GM10248 (cell line): ENCODE measurements at regions of chr1 and their contacts with region 1.

Region 1: GRCh38 chr1:160675641-160676410 is 29.0 kb upstream of the SLAMF1 start:
- DNase-seq: peak; percentile 67
- CTCF ChIP-seq: peak; percentile 90

Region 2: GRCh38 chr1:160646711-160647328 is 29.0 kb before region 1 on chr1 and contains the start of gene SLAMF1:
- CTCF ChIA-PET with region 1: interaction called, 16 read pairs
- POLR2A ChIA-PET with region 1: interaction called, 3 read pairs
- DNase-seq: no peak
- CTCF ChIP-seq: no peak

Region 3: DNA sequence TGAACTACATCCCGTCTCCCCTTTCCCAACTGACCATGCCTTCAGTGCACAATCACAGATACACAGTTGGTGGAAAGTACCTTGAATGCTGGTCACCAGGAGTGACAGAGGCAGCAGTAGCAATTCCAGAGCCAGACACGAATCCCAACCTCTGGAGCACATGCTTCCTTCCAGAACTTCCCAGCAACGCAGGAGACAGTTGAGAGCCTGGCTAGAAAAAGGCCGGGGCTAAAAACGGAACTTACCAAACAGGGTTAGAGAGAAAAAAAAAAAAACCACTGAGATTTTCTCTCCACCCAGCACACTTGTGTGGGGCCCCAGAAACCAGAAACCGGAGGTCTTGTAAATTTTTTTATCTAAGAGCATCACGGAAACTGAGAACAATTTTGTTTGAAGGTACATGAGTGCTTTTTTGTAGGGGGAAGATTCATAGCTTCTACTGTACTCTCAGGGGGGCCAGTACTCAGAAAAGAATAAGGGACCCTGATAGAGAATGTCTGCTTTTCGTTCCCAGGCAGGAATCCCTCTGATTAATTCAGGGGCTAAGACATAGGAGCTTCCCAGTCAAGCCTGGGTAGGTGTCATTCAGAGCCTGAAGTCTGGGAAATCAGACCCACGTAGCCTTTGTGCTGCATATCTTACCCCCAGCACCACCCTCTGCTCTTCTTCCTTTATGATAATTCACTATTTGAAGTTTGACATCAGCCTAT is 35.9 kb after region 1 on chr1 and contains the start of gene CD48:
- CTCF ChIA-PET with region 1: interaction called, 30 read pairs
- POLR2A ChIA-PET with region 1: no interaction called
- DNase-seq: peak; percentile 54
- CTCF ChIP-seq: no peak

Region 4: DNA sequence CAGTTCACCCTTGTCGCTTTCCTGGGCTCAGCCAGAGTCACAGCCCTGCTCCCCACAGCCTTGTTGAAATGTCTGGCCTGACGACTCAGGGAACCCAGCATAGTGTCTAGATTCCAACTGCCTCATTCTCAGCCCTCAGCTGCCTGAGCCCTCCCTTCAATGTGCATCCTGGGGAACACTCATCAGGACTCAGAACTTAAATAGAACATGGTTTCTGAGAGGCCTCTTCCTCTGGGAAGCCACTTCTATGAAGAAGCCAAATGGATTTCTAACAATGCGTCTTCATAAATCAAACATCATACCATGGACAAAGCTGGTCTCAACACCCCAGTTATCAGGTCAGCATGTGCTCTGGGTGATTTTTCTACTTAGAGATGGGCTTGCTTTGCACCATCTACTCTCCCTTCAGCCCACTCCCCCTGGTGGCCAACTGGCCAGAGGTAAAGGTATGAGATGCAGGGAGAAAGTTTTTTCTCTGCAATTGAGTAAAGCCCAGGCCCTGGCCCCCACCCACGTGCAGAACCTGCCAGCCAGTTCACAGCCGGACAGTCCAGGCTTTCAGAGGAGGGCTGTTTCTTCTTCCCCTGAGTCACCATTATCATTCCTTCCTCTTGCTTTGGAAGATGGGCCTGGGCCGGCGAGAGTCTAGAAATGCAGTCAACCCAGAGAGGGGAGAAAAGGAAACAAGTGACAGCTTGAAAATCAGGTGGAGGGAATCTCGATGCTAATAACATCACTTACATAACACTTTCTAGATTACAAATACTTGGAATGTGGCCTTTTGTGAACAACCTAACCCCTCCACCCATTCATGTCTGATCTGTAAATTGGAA is 154.7 kb after region 1 on chr1:
- CTCF ChIA-PET with region 1: interaction called, 24 read pairs
- POLR2A ChIA-PET with region 1: no interaction called
- DNase-seq: peak; percentile 65
- CTCF ChIP-seq: peak; percentile 72

Region 5: GRCh38 chr1:161115132-161115711 is 439.4 kb after region 1 on chr1:
- CTCF ChIA-PET with region 1: no interaction called
- POLR2A ChIA-PET with region 1: no interaction called
- DNase-seq: no peak
- CTCF ChIP-seq: no peak

Region 6: GRCh38 chr1:161145832-161146231 is 470.0 kb after region 1 on chr1:
- CTCF ChIA-PET with region 1: no interaction called
- POLR2A ChIA-PET with region 1: no interaction called
- DNase-seq: no peak
- CTCF ChIP-seq: no peak